ENCODE measurements at regions of chr1 and their contacts with region 1.

Region 1: DNA sequence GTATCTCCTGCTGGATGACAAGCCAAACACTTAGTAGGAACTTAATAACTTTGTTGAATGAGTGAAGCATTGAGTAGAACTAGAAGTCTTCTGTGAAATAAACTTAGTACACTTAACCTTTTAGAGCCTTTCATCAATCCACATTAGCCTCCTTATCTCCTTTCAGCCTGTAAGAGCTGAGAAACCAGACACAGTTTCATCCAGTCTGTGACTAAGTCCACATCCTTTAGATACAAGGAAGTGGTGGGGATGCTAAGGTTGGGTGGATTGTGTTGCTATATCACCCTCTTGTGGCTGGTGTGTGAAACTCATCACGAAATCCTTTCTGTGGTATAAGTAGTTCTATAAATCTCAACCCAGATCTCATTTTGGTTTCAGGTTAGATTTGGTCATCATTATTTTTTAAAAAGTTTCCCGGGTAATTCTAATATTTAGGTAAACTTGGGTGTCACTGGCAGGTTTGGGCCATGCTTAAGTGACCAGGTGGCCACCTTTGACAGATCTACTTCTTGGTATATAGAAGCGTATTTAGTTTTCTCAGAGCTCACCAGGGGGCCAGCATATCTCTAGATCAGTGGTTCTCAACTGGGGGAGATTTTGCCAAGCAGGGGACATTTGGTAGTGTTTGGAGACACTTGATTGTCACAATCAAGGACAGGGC is 27.8 kb upstream of the CD84 start:
- DNase-seq: peak; percentile 67
- H3K4me3 Mint-ChIP-seq: no peak overlapping the region
- H3K27ac Mint-ChIP-seq: no peak overlapping the region
- H3K4me1 Mint-ChIP-seq: no peaks in the 10 kb centered on the region
- H3K27me3 Mint-ChIP-seq: peaks cover 74% of the 10 kb centered on the region
- CTCF ChIP-seq: peak; percentile 73

Region 2: GRCh38 chr1:160494620-160495019 is 112.5 kb before region 1 on chr1:
- CTCF ChIA-PET with region 1: no interaction called
- intact Hi-C with region 1: loop called (anchors 1 kb)
- DNase-seq: peak; percentile 52
- H3K4me3 Mint-ChIP-seq: no peak overlapping the region
- H3K27ac Mint-ChIP-seq: no peak overlapping the region
- H3K4me1 Mint-ChIP-seq: no peaks in the 10 kb centered on the region
- H3K27me3 Mint-ChIP-seq: no peaks in the 10 kb centered on the region
- CTCF ChIP-seq: peak; percentile 56

Region 3: GRCh38 chr1:160539990-160540858 is 66.9 kb before region 1 on chr1:
- CTCF ChIA-PET with region 1: no interaction called
- intact Hi-C with region 1: loop called (anchors 5 kb)
- DNase-seq: no peak
- H3K4me3 Mint-ChIP-seq: no peak overlapping the region
- H3K27ac Mint-ChIP-seq: peak overlapping the region; percentile 15
- H3K4me1 Mint-ChIP-seq: peaks cover 50% of the 10 kb centered on the region
- H3K27me3 Mint-ChIP-seq: no peaks in the 10 kb centered on the region
- CTCF ChIP-seq: no peak

Measured in Calu3 (cell line).